ENCODE measurements at regions of chr7 and their contacts with region 1.

Region 1: DNA sequence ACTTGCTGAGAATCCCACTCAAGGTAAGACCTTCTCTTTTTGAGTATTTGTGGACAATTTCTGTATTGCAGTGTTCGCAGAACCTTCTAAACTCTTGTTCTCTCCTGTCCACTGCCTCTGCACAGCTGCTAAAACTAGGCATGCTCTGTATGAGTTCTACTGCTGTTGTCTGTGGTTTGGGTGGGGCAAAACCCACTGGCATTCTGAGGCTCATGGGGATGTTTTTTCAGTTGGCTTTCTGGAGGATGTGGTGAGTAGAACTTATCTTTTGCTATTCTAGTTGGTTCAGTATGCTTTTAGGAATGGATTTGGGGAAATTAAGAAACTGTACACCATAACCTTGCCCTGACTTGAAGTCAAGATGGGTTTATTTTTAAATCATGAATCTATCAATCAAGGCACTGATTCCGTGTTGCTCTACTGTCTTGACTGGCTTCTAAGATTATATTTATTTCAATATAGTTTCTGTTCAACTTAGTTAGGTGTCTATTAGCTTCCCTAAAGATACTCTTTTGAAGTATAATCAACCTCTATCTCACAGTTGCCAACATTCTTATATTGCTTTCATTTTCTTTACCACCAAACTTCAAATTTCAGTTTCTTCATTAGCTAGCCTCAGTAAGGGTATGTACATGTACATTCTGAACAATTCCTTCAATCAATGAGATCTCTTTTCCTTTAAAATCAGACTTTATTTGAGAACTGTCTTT is 25.0 kb upstream of the C1GALT1 start:
- DNase-seq: peak; percentile 79 to 86 (median 80)
- H3K4me3 ChIP-seq: peak overlapping the region; percentile 12 to 53
- H3K4me3 Mint-ChIP-seq: peak overlapping the region; percentile 69 to 86 (median 81)
- H3K27ac ChIP-seq: peak overlapping the region; percentile 55
- H3K27ac Mint-ChIP-seq: peak overlapping the region; percentile 64 to 95 (median 84)
- H3K4me1 ChIP-seq: peaks cover 63% of the 10 kb centered on the region
- H3K4me1 Mint-ChIP-seq: peaks cover 41 to 70% (median 55%) of the 10 kb centered on the region in 4 donors
- H3K27me3 ChIP-seq: no peaks in the 10 kb centered on the region
- H3K27me3 Mint-ChIP-seq: no peaks in the 10 kb centered on the region

Region 2: DNA sequence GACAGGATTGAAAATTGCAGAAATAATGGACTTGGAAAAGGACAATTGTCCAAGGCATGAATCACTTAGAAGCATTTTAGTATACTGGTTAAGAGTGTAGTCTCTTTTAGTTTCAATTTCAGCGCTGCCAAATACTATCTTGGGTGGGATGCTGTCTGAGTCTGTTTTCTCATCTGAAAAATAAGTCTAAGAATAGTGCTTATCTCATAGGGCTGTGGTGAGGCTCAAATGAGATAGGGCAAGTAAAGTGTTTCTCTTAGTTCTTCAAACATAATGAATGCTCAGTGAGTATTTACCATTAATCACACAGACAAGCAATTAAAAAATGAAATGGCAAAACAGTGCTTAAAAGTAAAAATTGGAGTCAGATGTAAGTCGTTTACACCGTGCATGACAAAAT is 20.9 kb before region 1 on chr7:
- CTCF ChIA-PET with region 1: no interaction called
- POLR2A ChIA-PET with region 1: no interaction called
- intact Hi-C with region 1: no loop called
- DNase-seq: no peak
- H3K4me3 ChIP-seq: no peak overlapping the region
- H3K4me3 Mint-ChIP-seq: peak overlapping the region in 3 of 8 donors; percentile 18 to 56 (median 32)
- H3K27ac ChIP-seq: no peak overlapping the region
- H3K27ac Mint-ChIP-seq: peak overlapping the region in 2 of 7 donors; percentile 10 to 43
- H3K4me1 ChIP-seq: no peaks in the 10 kb centered on the region
- H3K4me1 Mint-ChIP-seq: peaks cover 4 to 15% (median 6%) of the 10 kb centered on the region in 4 donors
- H3K27me3 ChIP-seq: no peaks in the 10 kb centered on the region
- H3K27me3 Mint-ChIP-seq: peaks cover 0 to 3% of the 10 kb centered on the region in 2 donors

Region 3: GRCh38 chr7:7176421-7177043 is 19.2 kb after region 1 on chr7:
- CTCF ChIA-PET with region 1: interaction called, 31 read pairs
- POLR2A ChIA-PET with region 1: interaction called, 128 read pairs
- intact Hi-C with region 1: no loop called
- DNase-seq: no peak
- H3K4me3 ChIP-seq: no peak overlapping the region
- H3K4me3 Mint-ChIP-seq: peak overlapping the region in 2 of 8 donors; percentile 3 to 18
- H3K27ac ChIP-seq: no peak overlapping the region
- H3K27ac Mint-ChIP-seq: peak overlapping the region in 1 of 7 donors; percentile 28
- H3K4me1 ChIP-seq: peaks cover 10% of the 10 kb centered on the region
- H3K4me1 Mint-ChIP-seq: peaks cover 7 to 23% (median 16%) of the 10 kb centered on the region in 4 donors
- H3K27me3 ChIP-seq: no peaks in the 10 kb centered on the region
- H3K27me3 Mint-ChIP-seq: no peaks in the 10 kb centered on the region